Adrenal gland (tissue), 19 donors: ENCODE measurements at regions of chr14 and their contacts with region 1.

Region 1: GRCh38 chr14:94689218-94689984 is 77.2 kb downstream of the SERPINA3 start:
- DNase-seq: peak; percentile 38 to 78 (median 64)
- H3K4me3 ChIP-seq: peak overlapping the region in 1 of 4 donors; percentile 17
- H3K27ac ChIP-seq: no peak overlapping the region
- H3K4me1 ChIP-seq: peaks cover 0 to 7% of the 10 kb centered on the region in 2 donors
- H3K27me3 ChIP-seq: no peaks in the 10 kb centered on the region
- CTCF ChIP-seq: peak; percentile 76 to 98 (median 90)
- POLR2A ChIP-seq: no peak

Region 2: GRCh38 chr14:94388384-94389103 is 300.9 kb before region 1 on chr14 and contains the start of gene SERPINA1:
- intact Hi-C with region 1: no loop called
- DNase-seq: peak in 2 of 7 donors; percentile 5 to 25
- H3K4me3 ChIP-seq: no peak within 1 kb of the TSS
- H3K27ac ChIP-seq: no peak within 1 kb of the TSS
- H3K4me1 ChIP-seq: no peaks in the 10 kb centered on the region
- H3K27me3 ChIP-seq: peaks cover 6% of the 10 kb centered on the region
- CTCF ChIP-seq: no peak
- POLR2A ChIP-seq: no peak
- total RNA-seq, gene SERPINA1: 1.6 to 60.1 (median 16.7) TPM

Region 3: DNA sequence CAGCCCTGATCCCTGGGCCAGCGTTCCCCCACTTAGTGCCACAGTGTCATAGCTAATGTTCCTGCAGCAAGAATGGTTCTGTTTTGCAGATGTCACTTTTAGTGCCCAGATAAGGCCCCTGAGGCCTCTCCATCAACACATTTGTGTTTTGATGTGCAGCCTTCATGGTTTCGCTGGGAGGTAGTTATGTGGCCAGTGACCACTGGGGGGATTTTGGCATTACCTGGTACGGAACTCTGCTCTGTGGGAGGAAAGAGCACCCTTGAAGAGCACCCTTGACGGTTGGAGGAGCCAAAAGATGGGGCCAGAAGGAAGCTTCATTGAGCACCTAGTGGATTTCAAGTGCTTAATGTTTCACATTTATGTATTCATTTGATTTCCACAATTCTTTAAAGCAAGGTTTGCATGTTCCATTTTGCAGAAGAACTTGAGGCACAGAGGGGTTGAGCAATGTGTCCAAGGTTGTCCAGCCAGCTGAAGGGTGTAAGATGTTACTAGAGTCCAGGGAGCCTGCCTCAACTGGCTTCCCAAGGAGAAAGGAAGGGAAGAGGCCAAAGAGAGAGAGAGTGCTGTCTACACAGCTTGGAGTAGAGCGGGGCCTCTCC is 249.8 kb before region 1 on chr14:
- intact Hi-C with region 1: loop called in 1 of 2 experiments (anchors 10 kb)
- DNase-seq: no peak
- H3K4me3 ChIP-seq: no peak overlapping the region
- H3K27ac ChIP-seq: no peak overlapping the region
- H3K4me1 ChIP-seq: no peaks in the 10 kb centered on the region
- H3K27me3 ChIP-seq: no peaks in the 10 kb centered on the region
- CTCF ChIP-seq: no peak
- POLR2A ChIP-seq: no peak

Region 4: DNA sequence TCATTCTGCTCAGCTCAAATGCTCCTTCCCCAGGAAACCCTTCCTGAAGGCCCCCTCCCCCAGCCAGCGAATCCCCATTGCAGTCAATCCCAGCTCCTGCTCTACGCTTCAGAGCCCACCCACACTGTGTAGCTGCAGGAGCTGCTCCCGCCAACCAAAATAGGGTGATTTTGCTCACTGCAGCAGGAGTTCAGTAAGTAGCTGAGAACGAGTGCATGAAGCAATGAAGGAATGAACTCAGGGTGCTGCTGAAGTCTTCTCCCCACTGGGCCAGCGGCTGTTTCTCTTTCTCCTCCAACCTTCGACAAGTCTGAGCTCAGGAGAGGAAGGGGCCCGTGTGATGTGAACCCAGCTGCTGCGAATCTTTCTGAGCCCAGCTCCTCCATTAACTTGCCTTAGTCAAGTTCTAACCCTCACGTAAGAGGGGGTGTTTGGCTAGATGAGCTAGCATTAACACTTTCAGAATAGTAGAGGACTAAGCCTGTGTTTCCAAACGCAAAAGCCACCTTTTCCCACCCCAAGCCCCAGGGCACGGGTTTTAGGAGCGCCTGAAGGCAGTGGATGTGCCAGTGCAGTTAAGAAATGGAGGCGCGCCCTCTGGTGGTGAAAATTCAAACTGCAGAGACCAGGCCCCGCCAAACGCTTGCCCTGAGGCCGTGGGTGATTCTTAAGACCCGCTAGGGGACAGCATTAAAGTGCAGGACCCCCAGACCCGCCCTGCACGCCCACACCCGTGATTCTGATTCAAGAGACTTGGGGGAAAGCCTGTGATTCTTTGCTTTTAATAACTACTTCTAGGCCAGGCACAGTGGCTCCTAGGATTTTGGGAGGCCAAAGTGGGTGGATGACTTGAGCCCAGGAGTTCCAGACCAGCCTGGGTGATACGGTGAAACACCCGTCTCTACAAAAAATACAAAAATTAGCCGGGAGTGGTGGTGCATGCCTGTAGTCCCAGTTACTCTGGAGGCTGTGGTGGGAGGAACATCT is 140.1 kb before region 1 on chr14:
- intact Hi-C with region 1: loop called in 1 of 2 experiments (anchors 10 kb)
- DNase-seq: peak; percentile 29 to 76 (median 60)
- H3K4me3 ChIP-seq: no peak overlapping the region
- H3K27ac ChIP-seq: no peak overlapping the region
- H3K4me1 ChIP-seq: no peaks in the 10 kb centered on the region
- H3K27me3 ChIP-seq: no peaks in the 10 kb centered on the region
- CTCF ChIP-seq: peak; percentile 60 to 93 (median 73)
- POLR2A ChIP-seq: no peak

Region 5: DNA sequence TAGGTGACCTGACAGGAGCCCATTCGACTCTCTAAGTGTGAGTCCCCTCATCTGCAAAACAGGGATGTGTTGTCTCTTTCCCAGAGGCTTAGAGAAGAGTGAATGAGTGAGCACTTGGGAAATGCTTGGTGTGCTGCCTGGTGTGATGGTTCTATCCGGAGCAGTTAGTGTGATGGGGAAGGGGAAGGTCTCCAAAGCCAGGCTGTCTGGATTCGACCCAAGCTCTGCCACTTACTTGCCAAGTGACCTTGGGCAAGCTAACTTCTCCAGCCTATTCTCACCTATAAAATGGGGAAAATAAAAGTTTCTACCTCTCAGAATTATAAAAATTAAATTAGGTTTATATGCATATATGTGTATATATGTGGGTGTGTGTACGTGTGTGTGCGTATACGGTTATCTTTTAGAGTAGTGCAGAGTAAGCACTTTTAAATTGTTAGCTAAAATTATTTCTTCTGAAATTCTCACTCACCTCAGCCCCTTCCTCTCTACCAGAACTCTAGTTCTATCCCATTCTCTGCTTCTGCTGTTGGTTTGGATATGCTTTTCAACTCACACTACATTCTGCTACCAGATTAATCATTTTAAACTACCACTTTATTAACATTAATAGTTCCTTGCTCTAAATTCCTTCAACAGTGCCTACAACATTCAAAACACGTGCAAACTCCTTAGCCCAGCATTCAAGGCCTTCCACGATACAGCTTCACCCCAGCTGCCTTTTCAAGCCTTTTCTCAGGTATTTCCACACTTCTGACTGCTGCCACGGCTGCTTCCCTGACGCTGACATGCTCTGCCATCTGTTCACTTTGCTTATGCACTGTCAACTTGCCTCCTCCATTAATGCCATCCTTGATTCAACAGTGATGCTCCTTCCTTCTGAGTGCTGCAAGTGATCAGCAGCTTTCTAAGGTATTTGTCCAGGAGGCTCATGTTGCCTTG is 412.6 kb after region 1 on chr14:
- intact Hi-C with region 1: loop called in 1 of 2 experiments (anchors 5 kb)
- DNase-seq: no peak
- H3K4me3 ChIP-seq: no peak overlapping the region
- H3K27ac ChIP-seq: no peak overlapping the region
- H3K4me1 ChIP-seq: no peaks in the 10 kb centered on the region
- H3K27me3 ChIP-seq: no peaks in the 10 kb centered on the region
- CTCF ChIP-seq: no peak
- POLR2A ChIP-seq: no peak

Region 6: DNA sequence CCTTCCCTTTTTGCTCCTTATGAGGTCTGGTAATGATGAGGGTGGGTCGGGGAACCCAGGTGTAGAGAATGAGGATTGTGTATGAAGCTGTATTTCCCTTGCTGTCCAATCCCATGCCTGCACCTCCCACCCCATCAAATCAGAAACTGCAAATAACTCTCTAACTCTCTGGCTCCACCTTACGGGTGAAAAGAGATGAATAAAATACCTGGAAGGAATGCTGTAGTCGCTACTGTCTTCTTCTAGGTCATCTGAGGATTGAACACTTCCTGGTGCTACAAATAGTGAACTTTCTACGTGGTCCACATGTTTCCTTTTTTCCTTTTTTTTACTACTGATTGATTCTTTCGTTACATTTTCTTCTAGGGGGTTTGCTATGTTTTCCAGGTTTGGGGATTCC is 506.9 kb after region 1 on chr14:
- intact Hi-C with region 1: loop called in 1 of 2 experiments (anchors 10 kb)
- DNase-seq: no peak
- H3K4me3 ChIP-seq: no peak overlapping the region
- H3K27ac ChIP-seq: no peak overlapping the region
- H3K4me1 ChIP-seq: no peaks in the 10 kb centered on the region
- H3K27me3 ChIP-seq: no peaks in the 10 kb centered on the region
- CTCF ChIP-seq: peak; percentile 9 to 56 (median 48)
- POLR2A ChIP-seq: no peak

Region 7: DNA sequence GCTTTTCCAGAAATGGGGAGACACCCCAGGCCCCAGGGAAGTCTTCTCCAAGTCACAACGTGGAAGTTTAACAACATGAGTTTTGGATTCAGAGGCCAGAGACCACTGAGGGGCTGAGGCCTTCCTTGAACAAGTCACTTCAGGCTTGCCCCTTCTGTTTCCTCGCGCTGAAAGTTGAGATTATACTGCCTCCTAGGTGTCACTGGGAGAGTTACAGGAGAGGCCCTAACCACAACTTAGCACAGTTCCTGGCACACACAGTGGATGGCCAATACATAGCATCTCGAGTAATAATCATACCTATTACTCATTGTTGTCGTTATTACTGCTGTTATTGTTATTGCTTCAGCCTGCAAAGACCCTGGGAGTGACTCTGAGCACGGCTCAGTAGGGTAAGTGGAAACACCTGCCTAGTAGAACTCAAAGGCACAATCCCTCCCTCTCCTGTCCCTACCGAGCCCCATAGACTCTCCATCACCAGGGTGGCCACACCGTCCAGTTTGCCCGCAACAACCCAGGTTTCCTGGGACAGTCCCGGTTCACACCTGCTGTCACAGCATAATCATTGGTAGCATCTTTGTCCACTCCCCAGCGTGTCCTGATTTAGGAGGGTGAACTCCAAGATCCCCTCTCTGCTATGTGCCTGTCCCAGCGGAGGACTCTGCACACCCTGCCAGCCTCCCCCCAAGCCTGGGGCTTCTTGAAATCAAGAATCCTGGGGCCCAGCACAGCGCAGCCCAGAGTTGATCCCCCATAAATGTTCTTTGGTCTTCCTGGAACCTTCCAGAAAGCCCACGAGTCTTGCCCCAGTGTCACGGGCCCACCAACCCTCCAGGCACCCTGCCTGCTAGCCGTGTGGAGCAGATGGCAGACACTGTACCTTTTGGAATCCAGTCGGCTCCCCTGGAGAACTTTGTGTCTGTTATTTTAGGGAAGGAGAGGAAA is 742.1 kb after region 1 on chr14:
- intact Hi-C with region 1: loop called in 1 of 2 experiments (anchors 5 kb)
- DNase-seq: no peak
- H3K4me3 ChIP-seq: no peak overlapping the region
- H3K27ac ChIP-seq: no peak overlapping the region
- H3K4me1 ChIP-seq: peaks cover 0 to 6% of the 10 kb centered on the region in 2 donors
- H3K27me3 ChIP-seq: no peaks in the 10 kb centered on the region
- CTCF ChIP-seq: peak in 3 of 6 experiments; percentile 42 to 43 (median 43)
- POLR2A ChIP-seq: no peak